ENCODE measurements at regions of chr1 and their contacts with region 1.

Region 1: GRCh38 chr1:240455228-240455821 is 156.6 kb downstream of the GREM2 start:
- DNase-seq: peak in 2 of 3 donors; percentile 19 to 20
- H3K4me3 ChIP-seq: no peak overlapping the region
- H3K27ac ChIP-seq: no peak overlapping the region
- H3K4me1 ChIP-seq: no peaks in the 10 kb centered on the region
- H3K27me3 ChIP-seq: peaks cover 0 to 2% (median 0%) of the 10 kb centered on the region in 5 experiments

Region 2: GRCh38 chr1:240555524-240555923 is 100.2 kb after region 1 on chr1:
- CTCF ChIA-PET with region 1: no interaction called
- POLR2A ChIA-PET with region 1: no interaction called
- DNase-seq: no peak
- H3K4me3 ChIP-seq: no peak overlapping the region
- H3K27ac ChIP-seq: no peak overlapping the region
- H3K4me1 ChIP-seq: no peaks in the 10 kb centered on the region
- H3K27me3 ChIP-seq: no peaks in the 10 kb centered on the region

Region 3: GRCh38 chr1:240691521-240692338 is 236.4 kb after region 1 on chr1:
- CTCF ChIA-PET with region 1: interaction called, 12 read pairs
- POLR2A ChIA-PET with region 1: no interaction called
- DNase-seq: peak; percentile 3 to 18 (median 3)
- H3K4me3 ChIP-seq: no peak overlapping the region
- H3K27ac ChIP-seq: no peak overlapping the region
- H3K4me1 ChIP-seq: no peaks in the 10 kb centered on the region
- H3K27me3 ChIP-seq: peaks cover 0 to 9% (median 2%) of the 10 kb centered on the region in 5 experiments

Measured in common myeloid progenitor, CD34-positive (primary cell).